GM12878 (cell line): ENCODE measurements at regions of chr12 and their contacts with region 1.

Region 1: DNA sequence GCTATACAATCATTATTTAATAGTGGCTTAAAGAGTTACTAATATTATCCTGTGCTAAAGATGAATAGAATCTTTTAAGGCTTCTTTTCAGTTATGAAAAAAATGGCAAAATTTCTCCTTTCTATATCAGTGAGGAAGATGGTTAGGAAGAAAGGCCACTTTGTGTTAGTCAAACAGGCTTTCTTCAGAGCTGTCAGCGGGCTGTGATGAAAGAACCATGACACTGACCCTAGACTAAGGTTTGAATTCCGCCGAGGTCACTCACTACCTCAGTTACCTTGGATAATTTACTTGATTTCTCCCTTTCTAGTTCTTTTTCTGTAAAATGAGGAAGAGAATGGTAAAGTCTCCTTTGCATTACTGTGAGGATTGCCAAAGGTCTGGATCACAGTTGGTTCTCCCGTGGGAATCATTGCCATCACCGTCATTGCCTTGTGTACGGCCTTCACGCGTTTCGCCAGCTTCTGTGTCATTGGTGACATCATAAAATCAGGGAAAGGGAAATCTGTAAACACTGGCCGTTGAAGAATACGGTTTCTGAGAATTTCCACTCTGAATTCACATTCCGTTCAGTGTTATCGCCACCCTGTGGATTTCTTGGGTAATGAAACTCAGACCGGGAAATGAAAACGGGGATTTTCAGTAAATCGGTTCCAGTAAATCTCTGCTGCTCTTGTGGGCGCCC is 26.7 kb upstream of the YBX3 start:
- DNase-seq: peak; percentile 68
- ATAC-seq: peak; percentile 99
- H3K4me3 ChIP-seq: peak overlapping the region; percentile 33; the same call in 1 of the 2 replicates
- H3K27ac ChIP-seq: no peak overlapping the region
- H3K4me1 ChIP-seq: no peaks in the 10 kb centered on the region
- H3K27me3 ChIP-seq: no peaks in the 10 kb centered on the region; a peak in 1 of 4 replicates
- CTCF ChIP-seq: peak; percentile 84 to 98 (median 96); a peak in 5 of 6 replicates
- EP300 ChIP-seq: no peak
- POLR2A ChIP-seq: no peak
- RAD21 ChIP-seq: peak; percentile 91

Region 2: DNA sequence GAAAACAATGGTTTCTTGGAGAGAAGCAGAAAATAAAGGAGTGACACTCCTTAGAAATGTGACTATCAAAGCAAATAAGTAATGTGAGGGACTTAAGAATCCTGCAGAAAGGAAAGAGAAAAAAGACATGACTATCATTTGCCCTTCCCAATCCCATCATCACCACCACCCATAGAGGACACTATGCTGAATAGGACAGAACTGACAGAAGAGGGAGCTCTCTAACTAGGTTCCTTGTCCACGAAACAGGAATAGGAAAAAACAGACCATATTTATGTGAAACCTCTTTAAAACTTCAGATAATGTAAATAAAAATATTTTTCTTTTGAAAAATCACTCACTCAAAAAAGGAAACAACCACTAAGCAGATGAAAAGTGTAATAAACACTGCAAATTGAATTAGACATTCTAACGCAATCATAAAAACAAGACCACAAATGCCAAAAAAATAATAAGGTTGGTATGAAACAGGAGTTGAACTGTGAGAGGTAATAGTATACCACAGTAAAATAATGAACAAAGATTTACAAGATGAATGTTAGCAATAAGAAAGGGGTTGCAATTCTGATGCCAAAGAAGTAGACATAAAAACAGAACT is 418.1 kb before region 1 on chr12:
- CTCF ChIA-PET with region 1: interaction called, 5 read pairs
- POLR2A ChIA-PET with region 1: no interaction called
- RAD21 ChIA-PET with region 1: no interaction called
- SMC1A ChIA-PET with region 1: interaction called, 8 read pairs
- in situ Hi-C with region 1: no loop called
- intact Hi-C with region 1: loop called (anchors 2 kb)
- DNase-seq: no peak
- ATAC-seq: peak; percentile 84
- H3K4me3 ChIP-seq: no peak overlapping the region
- H3K27ac ChIP-seq: no peak overlapping the region
- H3K4me1 ChIP-seq: no peaks in the 10 kb centered on the region
- H3K27me3 ChIP-seq: no peaks in the 10 kb centered on the region; a peak in 1 of 4 replicates
- CTCF ChIP-seq: peak; percentile 58 to 75 (median 63); a peak in 5 of 6 replicates
- EP300 ChIP-seq: no peak
- POLR2A ChIP-seq: no peak
- RAD21 ChIP-seq: peak; percentile 94

Region 3: GRCh38 chr12:10613349-10614055 is 136.3 kb before region 1 on chr12 and contains the start of gene MAGOHB:
- CTCF ChIA-PET with region 1: interaction called, 20 read pairs
- POLR2A ChIA-PET with region 1: no interaction called
- RAD21 ChIA-PET with region 1: interaction called, 3 read pairs
- SMC1A ChIA-PET with region 1: interaction called, 3 read pairs
- in situ Hi-C with region 1: no loop called
- intact Hi-C with region 1: loop called (anchors 5 kb)
- DNase-seq: peak; percentile 90
- ATAC-seq: peak; percentile 96
- H3K4me3 ChIP-seq: peak within 1 kb of the TSS; percentile 71
- H3K27ac ChIP-seq: peak within 1 kb of the TSS; percentile 88
- H3K4me1 ChIP-seq: no peaks in the 10 kb centered on the region
- H3K27me3 ChIP-seq: no peaks in the 10 kb centered on the region
- CTCF ChIP-seq: no peak
- EP300 ChIP-seq: peak; percentile 43 to 67; a peak in 2 of 4 replicates
- POLR2A ChIP-seq: peak; percentile 94
- RAD21 ChIP-seq: no peak
- polyA plus RNA-seq, gene MAGOHB: 151 to 161 TPM

Region 4: DNA sequence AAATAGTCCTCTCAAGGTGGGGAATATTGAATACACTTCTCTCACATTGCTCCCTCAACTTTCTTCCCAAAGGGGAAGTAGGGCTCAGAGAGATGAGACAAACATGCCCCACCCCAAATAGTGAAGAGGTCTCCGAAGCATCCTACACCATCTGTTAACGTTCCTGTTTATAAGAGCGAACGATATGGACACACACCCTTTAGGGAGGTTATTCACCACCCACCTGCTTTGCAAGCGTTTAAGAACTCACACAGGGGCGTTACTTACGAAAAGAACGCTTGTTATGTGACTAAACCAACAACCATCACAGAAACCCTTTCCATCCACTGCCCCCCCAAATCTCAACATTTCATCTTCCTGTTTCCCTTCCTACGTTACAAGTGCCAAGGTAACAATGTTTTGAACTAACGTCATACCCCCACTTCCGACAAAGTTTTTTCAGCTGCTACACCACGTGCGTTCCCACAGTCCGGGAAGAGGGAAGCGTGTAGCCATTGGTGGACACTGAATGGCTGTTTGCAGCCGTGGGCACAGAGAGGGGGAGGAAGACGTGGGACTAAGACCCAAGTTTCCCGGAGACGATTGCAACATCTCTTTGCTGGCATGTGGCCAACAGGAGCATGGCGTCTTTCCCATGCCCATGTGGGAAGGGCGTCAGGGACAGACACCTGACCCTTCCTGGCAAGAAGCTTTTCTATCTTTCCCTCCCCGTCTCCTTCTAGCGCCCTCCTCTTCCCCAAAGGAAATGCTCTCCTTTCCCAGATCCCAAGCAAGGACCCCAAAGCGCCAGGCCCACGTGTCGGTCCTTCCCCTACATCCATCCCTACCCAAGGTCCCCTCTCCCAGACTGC is 28.0 kb before region 1 on chr12:
- CTCF ChIA-PET with region 1: interaction called, 29 read pairs
- POLR2A ChIA-PET with region 1: interaction called, 7 read pairs
- RAD21 ChIA-PET with region 1: interaction called, 16 read pairs
- SMC1A ChIA-PET with region 1: interaction called, 35 read pairs
- in situ Hi-C with region 1: no loop called
- intact Hi-C with region 1: loop called (anchors 2 kb)
- DNase-seq: peak; percentile 53
- ATAC-seq: peak; percentile 62
- H3K4me3 ChIP-seq: peak overlapping the region; percentile 90
- H3K27ac ChIP-seq: peak overlapping the region; percentile 73
- H3K4me1 ChIP-seq: 0 out of 2 replicates have a peak, but pooled peaks cover 3% of the 10 kb centered on the region
- H3K27me3 ChIP-seq: 0 out of 4 replicates have a peak, but pooled peaks cover 0 to 2% of the 10 kb centered on the region in 2 experiments
- CTCF ChIP-seq: no peak
- EP300 ChIP-seq: peak in 1 of 2 experiments; percentile 28; a peak in 1 of 4 replicates
- POLR2A ChIP-seq: peak; percentile 60; the same call in 1 of the 2 replicates
- RAD21 ChIP-seq: no peak

Region 5: DNA sequence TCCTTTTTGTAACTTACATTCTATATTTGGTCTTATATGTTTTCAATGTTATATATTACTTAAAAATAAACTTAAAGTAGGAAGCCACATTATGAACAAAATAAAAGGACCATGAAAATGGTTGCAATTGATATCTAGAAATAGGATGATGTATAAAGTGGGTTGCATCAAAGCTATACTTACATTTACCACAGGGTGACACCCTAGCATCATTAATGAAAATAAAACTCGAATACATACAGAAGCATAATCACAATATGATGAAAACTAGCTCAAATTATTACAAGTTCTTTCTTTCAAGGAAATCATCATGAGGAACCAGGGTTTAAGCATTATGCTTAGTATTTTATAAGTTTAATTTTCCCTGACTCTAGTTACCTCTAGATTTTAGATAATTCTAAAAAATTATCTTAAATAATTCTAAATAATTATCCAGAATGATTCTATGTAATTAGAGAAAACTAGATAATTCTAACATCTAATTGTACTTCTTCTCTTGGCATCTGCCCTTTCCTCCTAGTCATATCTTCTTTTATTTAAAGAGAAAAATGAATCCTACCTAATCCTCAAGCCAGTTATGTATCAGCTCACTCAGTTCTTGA is 21.4 kb after region 1 on chr12:
- CTCF ChIA-PET with region 1: interaction called, 15 read pairs
- POLR2A ChIA-PET with region 1: no interaction called
- RAD21 ChIA-PET with region 1: no interaction called
- SMC1A ChIA-PET with region 1: interaction called, 4 read pairs
- in situ Hi-C with region 1: no loop called
- intact Hi-C with region 1: no loop called
- DNase-seq: no peak
- ATAC-seq: 0 out of 3 replicates have a peak, but pooled peaks have one; percentile 37
- H3K4me3 ChIP-seq: no peak overlapping the region
- H3K27ac ChIP-seq: no peak overlapping the region
- H3K4me1 ChIP-seq: no peaks in the 10 kb centered on the region
- H3K27me3 ChIP-seq: peaks cover 0 to 5% of the 10 kb centered on the region in 2 experiments; a peak in 1 of 4 replicates
- CTCF ChIP-seq: peak; percentile 40 to 66 (median 50); a peak in 5 of 6 replicates
- EP300 ChIP-seq: no peak
- POLR2A ChIP-seq: no peak
- RAD21 ChIP-seq: peak; percentile 77

Region 6: GRCh38 chr12:11202811-11203210 is 453.0 kb after region 1 on chr12:
- CTCF ChIA-PET with region 1: interaction called, 14 read pairs
- POLR2A ChIA-PET with region 1: no interaction called
- RAD21 ChIA-PET with region 1: interaction called, 4 read pairs
- SMC1A ChIA-PET with region 1: interaction called, 9 read pairs
- in situ Hi-C with region 1: no loop called
- intact Hi-C with region 1: no loop called
- DNase-seq: no peak
- ATAC-seq: no peak
- H3K4me3 ChIP-seq: no peak overlapping the region
- H3K27ac ChIP-seq: no peak overlapping the region
- H3K4me1 ChIP-seq: no peaks in the 10 kb centered on the region
- H3K27me3 ChIP-seq: no peaks in the 10 kb centered on the region; a peak in 1 of 4 replicates
- CTCF ChIP-seq: no peak
- EP300 ChIP-seq: no peak
- POLR2A ChIP-seq: no peak
- RAD21 ChIP-seq: no peak

Region 7: GRCh38 chr12:11500178-11500860 is 750.5 kb after region 1 on chr12:
- CTCF ChIA-PET with region 1: no interaction called
- POLR2A ChIA-PET with region 1: no interaction called
- RAD21 ChIA-PET with region 1: no interaction called
- SMC1A ChIA-PET with region 1: no interaction called
- in situ Hi-C with region 1: no loop called
- intact Hi-C with region 1: no loop called
- DNase-seq: no peak
- ATAC-seq: peak; percentile 83
- H3K4me3 ChIP-seq: no peak overlapping the region
- H3K27ac ChIP-seq: no peak overlapping the region
- H3K4me1 ChIP-seq: peaks cover 5% of the 10 kb centered on the region
- H3K27me3 ChIP-seq: peaks cover 0 to 7% of the 10 kb centered on the region in 2 experiments; a peak in 3 of 4 replicates
- CTCF ChIP-seq: no peak
- EP300 ChIP-seq: no peak; a peak in 1 of 4 replicates
- POLR2A ChIP-seq: no peak
- RAD21 ChIP-seq: no peak